ENCODE measurements at regions of chr4 and their contacts with region 1.

Region 1: GRCh38 chr4:80335554-80336358 is at the start of gene CFAP299:
- DNase-seq: peak; percentile 89
- H3K4me3 ChIP-seq: peak within 1 kb of the TSS; percentile 84 to 85
- H3K27ac ChIP-seq: peak within 1 kb of the TSS; percentile 39 to 43; a peak in 3 of 4 replicates
- H3K4me1 ChIP-seq: peaks cover 0 to 7% of the 10 kb centered on the region in 2 experiments; a peak in 2 of 4 replicates
- H3K27me3 ChIP-seq: no peaks in the 10 kb centered on the region
- CTCF ChIP-seq: peak; percentile 71
- EP300 ChIP-seq: no peak
- RAD21 ChIP-seq: peak; percentile 61
- polyA plus RNA-seq, gene CFAP299: 1.2 and 2.3 TPM in 2 replicates

Region 2: GRCh38 chr4:80215449-80216052 is 120.2 kb before region 1 on chr4:
- CTCF ChIA-PET with region 1: interaction called, 108 read pairs
- POLR2A ChIA-PET with region 1: no interaction called
- DNase-seq: no peak
- H3K4me3 ChIP-seq: peak overlapping the region in 1 of 2 experiments; percentile 28; a peak in 1 of 4 replicates
- H3K27ac ChIP-seq: no peak overlapping the region
- H3K4me1 ChIP-seq: peaks cover 4 to 7% of the 10 kb centered on the region in 2 experiments; a peak in 2 of 4 replicates
- H3K27me3 ChIP-seq: no peaks in the 10 kb centered on the region
- CTCF ChIP-seq: peak; percentile 74
- EP300 ChIP-seq: no peak
- RAD21 ChIP-seq: peak; percentile 82

Region 3: DNA sequence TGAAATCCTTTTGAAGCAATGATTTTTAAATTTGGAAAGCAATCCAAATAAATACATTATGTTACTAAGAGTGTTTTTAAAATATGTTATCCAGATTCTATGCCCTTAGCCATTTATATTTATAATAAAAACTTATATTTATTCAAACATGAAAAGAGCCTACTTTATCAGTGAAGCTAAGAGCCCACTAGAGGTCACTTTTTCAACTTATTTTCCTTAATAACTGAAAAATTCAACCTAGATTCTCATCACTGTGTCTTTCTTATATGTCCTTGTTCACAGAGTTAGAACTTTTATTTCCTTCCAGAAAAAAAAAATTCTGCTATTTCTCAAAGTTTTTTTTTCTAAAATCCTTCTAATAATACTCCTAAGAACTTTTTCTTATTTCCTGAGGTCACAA is 114.6 kb before region 1 on chr4:
- CTCF ChIA-PET with region 1: interaction called, 108 read pairs
- POLR2A ChIA-PET with region 1: no interaction called
- DNase-seq: no peak
- H3K4me3 ChIP-seq: no peak overlapping the region
- H3K27ac ChIP-seq: peak overlapping the region in 1 of 2 experiments; percentile 64; a peak in 1 of 4 replicates
- H3K4me1 ChIP-seq: peaks cover 7 to 8% of the 10 kb centered on the region in 2 experiments; a peak in 3 of 4 replicates
- H3K27me3 ChIP-seq: no peaks in the 10 kb centered on the region
- CTCF ChIP-seq: peak; percentile 72
- EP300 ChIP-seq: no peak
- RAD21 ChIP-seq: peak; percentile 60

Region 4: DNA sequence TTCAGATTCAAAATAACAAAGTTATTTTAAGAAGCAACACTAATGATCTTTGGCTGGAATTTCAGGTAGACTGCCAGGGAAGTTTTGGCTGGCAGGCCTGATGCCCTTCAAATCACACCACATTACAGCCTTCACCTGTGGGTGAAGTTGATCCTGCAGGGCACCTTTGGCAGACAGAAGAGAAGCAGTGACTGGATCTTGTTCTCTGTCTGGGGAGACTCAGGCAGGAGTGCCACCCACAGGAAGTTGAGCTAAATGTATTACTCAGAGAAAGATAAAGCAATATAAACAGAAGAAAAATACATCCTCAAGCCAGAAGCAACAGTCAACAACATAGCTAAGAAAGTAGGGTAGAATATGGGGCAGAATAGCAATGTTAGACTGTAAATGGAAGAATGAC is 13.0 kb before region 1 on chr4:
- CTCF ChIA-PET with region 1: interaction called, 17 read pairs
- POLR2A ChIA-PET with region 1: no interaction called
- DNase-seq: no peak
- H3K4me3 ChIP-seq: no peak overlapping the region
- H3K27ac ChIP-seq: peak overlapping the region in 1 of 2 experiments; percentile 34; a peak in 2 of 4 replicates
- H3K4me1 ChIP-seq: peaks cover 2 to 10% of the 10 kb centered on the region in 2 experiments; a peak in 3 of 4 replicates
- H3K27me3 ChIP-seq: no peaks in the 10 kb centered on the region
- CTCF ChIP-seq: peak; percentile 61
- EP300 ChIP-seq: no peak
- RAD21 ChIP-seq: peak; percentile 59

Region 5: DNA sequence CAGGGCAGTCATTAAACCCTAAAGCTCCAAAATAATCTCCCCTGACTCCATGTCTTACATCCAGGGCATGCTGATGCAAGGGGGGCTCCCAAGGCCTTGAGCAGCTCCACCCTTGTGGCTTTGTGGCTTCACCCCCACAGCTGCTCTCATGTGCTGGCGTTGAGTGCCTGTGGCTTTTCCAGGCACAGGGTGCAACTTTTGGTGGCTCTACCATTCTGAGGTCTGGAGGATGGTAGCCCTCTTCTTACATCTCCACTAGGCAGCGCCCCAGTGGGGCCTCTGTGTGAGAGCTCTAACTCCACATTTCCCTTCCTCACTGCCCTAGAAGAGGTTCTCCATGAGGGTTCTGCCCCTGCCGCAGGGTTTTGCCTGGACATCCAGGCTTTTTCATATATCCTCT is 34.9 kb after region 1 on chr4:
- CTCF ChIA-PET with region 1: no interaction called
- POLR2A ChIA-PET with region 1: no interaction called
- DNase-seq: no peak
- H3K4me3 ChIP-seq: no peak overlapping the region
- H3K27ac ChIP-seq: no peak overlapping the region
- H3K4me1 ChIP-seq: no peaks in the 10 kb centered on the region
- H3K27me3 ChIP-seq: no peaks in the 10 kb centered on the region
- CTCF ChIP-seq: no peak
- EP300 ChIP-seq: no peak
- RAD21 ChIP-seq: no peak

Region 6: GRCh38 chr4:80434238-80434637 is 98.5 kb after region 1 on chr4:
- CTCF ChIA-PET with region 1: no interaction called
- POLR2A ChIA-PET with region 1: no interaction called
- DNase-seq: no peak
- H3K4me3 ChIP-seq: no peak overlapping the region
- H3K27ac ChIP-seq: no peak overlapping the region; a peak in 2 of 4 replicates
- H3K4me1 ChIP-seq: no peaks in the 10 kb centered on the region; a peak in 1 of 4 replicates
- H3K27me3 ChIP-seq: no peaks in the 10 kb centered on the region
- CTCF ChIP-seq: no peak
- EP300 ChIP-seq: no peak
- RAD21 ChIP-seq: no peak

Region 7: DNA sequence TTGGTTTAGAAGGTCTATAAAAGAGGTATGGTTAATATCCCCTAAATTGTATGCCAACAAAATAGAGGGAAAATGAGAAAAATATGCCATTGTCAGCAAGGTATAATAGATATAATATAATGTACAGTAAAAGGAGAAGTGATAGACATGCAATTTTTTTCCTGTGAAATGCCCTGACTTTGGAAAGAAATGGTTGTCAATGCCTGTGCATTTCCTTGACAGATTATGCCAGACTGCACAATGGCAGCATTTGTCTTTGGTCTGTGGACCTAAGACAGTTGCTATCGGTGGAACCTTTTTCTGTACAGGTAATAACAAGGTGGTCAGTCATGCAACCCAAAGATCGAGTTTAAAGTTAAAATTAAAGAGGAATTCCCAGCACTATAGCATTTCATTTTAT is 301.4 kb after region 1 on chr4:
- CTCF ChIA-PET with region 1: no interaction called
- POLR2A ChIA-PET with region 1: no interaction called
- DNase-seq: no peak
- H3K4me3 ChIP-seq: no peak overlapping the region
- H3K27ac ChIP-seq: no peak overlapping the region
- H3K4me1 ChIP-seq: no peaks in the 10 kb centered on the region
- H3K27me3 ChIP-seq: no peaks in the 10 kb centered on the region
- CTCF ChIP-seq: no peak
- EP300 ChIP-seq: no peak
- RAD21 ChIP-seq: no peak

Region 8: GRCh38 chr4:80841587-80842281 is 506.0 kb after region 1 on chr4:
- CTCF ChIA-PET with region 1: no interaction called
- POLR2A ChIA-PET with region 1: no interaction called
- DNase-seq: no peak
- H3K4me3 ChIP-seq: no peak overlapping the region
- H3K27ac ChIP-seq: no peak overlapping the region
- H3K4me1 ChIP-seq: peaks cover 0 to 5% of the 10 kb centered on the region in 2 experiments; a peak in 1 of 4 replicates
- H3K27me3 ChIP-seq: no peaks in the 10 kb centered on the region
- CTCF ChIP-seq: no peak
- EP300 ChIP-seq: no peak
- RAD21 ChIP-seq: no peak